Common myeloid progenitor, CD34-positive (primary cell): ENCODE measurements at regions of chr12 and their contacts with region 1.

Region 1: GRCh38 chr12:56206457-56207166 is 15.1 kb downstream of the RNF41 start:
- DNase-seq: peak in 2 of 3 donors; percentile 54 to 55
- H3K4me3 ChIP-seq: no peak overlapping the region
- H3K27ac ChIP-seq: no peak overlapping the region
- H3K4me1 ChIP-seq: peaks cover 0 to 22% (median 13%) of the 10 kb centered on the region in 4 experiments
- H3K27me3 ChIP-seq: no peaks in the 10 kb centered on the region

Region 2: GRCh38 chr12:56224102-56224701 is 17.6 kb after region 1 on chr12 and contains the start of gene NABP2:
- CTCF ChIA-PET with region 1: interaction called, 103 read pairs
- POLR2A ChIA-PET with region 1: interaction called, 21 read pairs
- DNase-seq: peak; percentile 96
- H3K4me3 ChIP-seq: peak within 1 kb of the TSS; percentile 37 to 89 (median 83)
- H3K27ac ChIP-seq: peak within 1 kb of the TSS in 1 of 2 experiments; percentile 83
- H3K4me1 ChIP-seq: peaks cover 9 to 49% (median 42%) of the 10 kb centered on the region in 4 experiments
- H3K27me3 ChIP-seq: no peaks in the 10 kb centered on the region

Region 3: DNA sequence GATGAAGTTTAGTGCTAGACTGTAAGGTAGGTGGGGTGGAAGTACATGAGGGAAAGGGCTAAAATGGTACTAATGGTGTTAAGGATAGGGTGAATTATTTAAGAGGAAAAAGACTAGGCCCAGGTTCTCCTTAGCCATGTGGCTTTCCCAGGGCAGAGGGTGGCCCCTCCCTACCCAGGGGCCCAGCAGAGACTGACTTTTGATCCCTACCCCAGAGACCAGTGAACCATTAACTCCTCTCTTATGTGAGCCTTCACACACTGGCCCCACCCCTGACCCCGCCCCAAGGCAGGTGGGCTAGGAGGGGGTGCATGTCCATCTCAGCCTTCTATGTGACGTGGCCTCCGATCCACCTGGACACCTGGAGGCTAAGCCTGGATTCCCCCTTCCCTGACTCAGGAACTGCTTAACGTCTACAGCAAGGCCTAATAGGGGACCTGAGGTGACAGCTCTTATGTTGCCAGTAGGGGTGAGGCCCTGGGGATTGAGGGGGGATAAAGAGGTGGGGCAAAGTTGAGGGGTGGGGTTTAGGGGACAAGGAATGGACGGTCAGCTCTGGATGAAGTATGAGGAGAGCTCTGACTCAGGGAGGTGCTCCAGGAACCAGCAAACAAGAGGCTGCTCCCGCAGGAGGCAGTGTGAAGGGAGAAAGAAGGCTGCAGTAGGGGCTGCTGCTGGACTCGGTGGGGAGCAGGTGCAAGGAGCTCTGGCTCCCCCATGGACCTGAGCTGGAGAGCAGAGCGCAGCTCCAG is 24.0 kb after region 1 on chr12:
- CTCF ChIA-PET with region 1: interaction called, 39 read pairs
- POLR2A ChIA-PET with region 1: no interaction called
- DNase-seq: no peak
- H3K4me3 ChIP-seq: no peak overlapping the region
- H3K27ac ChIP-seq: no peak overlapping the region
- H3K4me1 ChIP-seq: no peaks in the 10 kb centered on the region
- H3K27me3 ChIP-seq: no peaks in the 10 kb centered on the region

Region 4: DNA sequence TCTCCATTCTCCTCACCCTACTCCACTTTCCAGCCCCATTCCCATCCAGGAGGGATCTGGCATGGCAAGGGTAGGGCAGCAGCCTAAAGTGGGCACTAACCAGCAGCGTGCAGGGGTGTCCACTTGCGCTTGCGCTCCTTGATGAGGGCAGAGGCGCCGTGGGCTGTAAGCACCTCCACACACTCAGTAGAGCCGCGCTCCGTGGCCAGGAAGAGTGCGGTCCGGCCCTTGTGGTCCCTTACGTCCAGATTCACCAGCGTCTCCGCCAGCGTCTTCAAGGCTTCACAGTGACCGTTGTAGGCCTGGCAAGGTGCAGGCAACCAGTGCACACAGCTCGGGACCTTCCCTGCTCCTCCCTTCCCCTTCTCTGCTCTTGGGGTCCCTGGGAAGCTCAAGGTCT is 41.3 kb after region 1 on chr12:
- CTCF ChIA-PET with region 1: interaction called, 22 read pairs
- POLR2A ChIA-PET with region 1: no interaction called
- DNase-seq: no peak
- H3K4me3 ChIP-seq: no peak overlapping the region
- H3K27ac ChIP-seq: no peak overlapping the region
- H3K4me1 ChIP-seq: no peaks in the 10 kb centered on the region
- H3K27me3 ChIP-seq: no peaks in the 10 kb centered on the region

Region 5: DNA sequence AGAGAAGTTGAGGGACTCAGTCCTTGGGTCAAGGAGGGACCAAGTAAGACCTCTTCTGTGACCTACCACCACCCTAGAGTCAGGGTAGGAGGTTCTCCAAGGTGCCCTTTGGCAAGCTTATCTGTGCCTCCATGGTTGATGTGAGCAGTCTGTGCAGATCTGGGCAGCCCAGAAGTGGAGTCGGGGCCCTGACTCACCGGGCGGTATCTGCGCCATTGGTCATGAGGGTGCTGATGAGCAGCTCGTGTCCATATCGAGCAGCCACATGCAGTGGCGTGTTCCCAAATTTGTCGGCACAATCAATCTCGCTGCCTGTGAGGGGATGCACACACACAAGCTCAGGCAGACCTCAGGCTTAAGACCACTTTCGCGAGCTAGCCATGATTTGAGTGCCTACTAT is 46.5 kb after region 1 on chr12:
- CTCF ChIA-PET with region 1: interaction called, 22 read pairs
- POLR2A ChIA-PET with region 1: no interaction called
- DNase-seq: no peak
- H3K4me3 ChIP-seq: no peak overlapping the region
- H3K27ac ChIP-seq: no peak overlapping the region
- H3K4me1 ChIP-seq: peaks cover 0 to 14% (median 10%) of the 10 kb centered on the region in 4 experiments
- H3K27me3 ChIP-seq: no peaks in the 10 kb centered on the region

Region 6: GRCh38 chr12:56258057-56258819 is 51.6 kb after region 1 on chr12 and contains the start of gene ANKRD52:
- CTCF ChIA-PET with region 1: interaction called, 22 read pairs
- POLR2A ChIA-PET with region 1: no interaction called
- DNase-seq: peak; percentile 77 to 88 (median 87)
- H3K4me3 ChIP-seq: peak within 1 kb of the TSS; percentile 74 to 86 (median 84)
- H3K27ac ChIP-seq: peak within 1 kb of the TSS; percentile 46 to 74
- H3K4me1 ChIP-seq: peaks cover 0 to 19% (median 15%) of the 10 kb centered on the region in 4 experiments
- H3K27me3 ChIP-seq: no peaks in the 10 kb centered on the region